ENCODE measurements at regions of chr15 and their contacts with region 1.

Region 1: DNA sequence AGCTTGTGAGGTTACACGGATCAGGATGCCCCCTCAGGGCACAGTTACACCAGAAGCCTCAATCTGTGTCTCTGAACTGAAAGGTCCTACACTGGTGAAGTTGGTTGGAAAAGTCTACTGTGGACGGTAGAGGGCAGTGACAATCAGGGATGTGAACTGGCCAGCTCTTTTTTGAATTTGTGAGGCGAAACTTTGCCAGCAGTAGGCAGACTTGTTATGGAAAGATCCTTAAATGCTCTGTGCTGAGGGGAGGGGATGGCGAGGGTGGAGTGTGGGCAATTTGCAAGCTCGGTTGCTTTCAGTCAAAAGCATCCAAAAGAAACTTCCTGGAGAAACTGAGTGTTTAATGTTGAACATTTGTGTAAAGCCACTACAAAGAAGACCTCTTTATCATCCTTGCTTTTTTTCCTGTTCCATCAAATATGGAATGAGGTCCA is 127.4 kb upstream of the ABHD17C start:
- DNase-seq: peak; percentile 35
- ATAC-seq: peak; percentile 81
- H3K4me3 ChIP-seq: no peak overlapping the region
- H3K27ac ChIP-seq: no peak overlapping the region
- H3K4me1 ChIP-seq: no peaks in the 10 kb centered on the region
- H3K27me3 ChIP-seq: no peaks in the 10 kb centered on the region
- CTCF ChIP-seq: peak; percentile 77

Region 2: DNA sequence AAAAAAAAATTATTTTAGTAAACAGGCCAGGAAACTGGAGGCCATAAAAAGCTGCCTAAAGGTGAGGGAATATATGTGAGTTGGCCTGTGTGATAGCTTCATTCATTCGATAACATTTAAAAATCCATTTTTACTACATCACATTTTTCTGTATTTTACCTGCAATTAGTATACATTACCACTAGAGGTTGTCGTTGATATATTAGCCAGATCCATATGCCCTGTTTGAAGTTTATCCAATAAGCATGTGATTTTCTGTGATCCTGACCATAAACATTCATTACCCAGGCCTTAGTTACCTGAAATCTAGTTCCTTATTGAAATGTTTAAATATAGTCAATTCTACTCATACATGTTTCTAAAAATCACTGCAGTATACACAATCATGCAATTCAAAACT is 92.2 kb before region 1 on chr15:
- intact Hi-C with region 1: loop called (anchors 10 kb)
- DNase-seq: no peak
- ATAC-seq: no peak
- H3K4me3 ChIP-seq: no peak overlapping the region
- H3K27ac ChIP-seq: no peak overlapping the region
- H3K4me1 ChIP-seq: peaks cover 7% of the 10 kb centered on the region
- H3K27me3 ChIP-seq: no peaks in the 10 kb centered on the region
- CTCF ChIP-seq: no peak